ENCODE measurements at regions of chr19 and their contacts with region 1.

Region 1: GRCh38 chr19:35545001-35545911 is at the start of gene TMEM147:
- DNase-seq: peak; percentile 65 to 96
- H3K4me3 ChIP-seq: peak within 1 kb of the TSS; percentile 87 to 88
- H3K27ac ChIP-seq: peak within 1 kb of the TSS; percentile 76 to 88
- H3K4me1 ChIP-seq: peaks cover 0 to 15% of the 10 kb centered on the region in 2 donors
- H3K27me3 ChIP-seq: no peaks in the 10 kb centered on the region
- CTCF ChIP-seq: no peak
- total RNA-seq, gene TMEM147: 99.7 TPM

Region 2: GRCh38 chr19:34677386-34678084 is 867.7 kb before region 1 on chr19 and contains the start of gene ZNF302:
- intact Hi-C with region 1: loop called (anchors 10 kb)
- DNase-seq: peak; percentile 86 to 98
- H3K4me3 ChIP-seq: peak within 1 kb of the TSS; percentile 83 to 85
- H3K27ac ChIP-seq: peak within 1 kb of the TSS; percentile 99
- H3K4me1 ChIP-seq: peaks cover 0 to 9% of the 10 kb centered on the region in 2 donors
- H3K27me3 ChIP-seq: no peaks in the 10 kb centered on the region
- CTCF ChIP-seq: no peak
- total RNA-seq, gene ZNF302: 42.0 TPM

Region 3: DNA sequence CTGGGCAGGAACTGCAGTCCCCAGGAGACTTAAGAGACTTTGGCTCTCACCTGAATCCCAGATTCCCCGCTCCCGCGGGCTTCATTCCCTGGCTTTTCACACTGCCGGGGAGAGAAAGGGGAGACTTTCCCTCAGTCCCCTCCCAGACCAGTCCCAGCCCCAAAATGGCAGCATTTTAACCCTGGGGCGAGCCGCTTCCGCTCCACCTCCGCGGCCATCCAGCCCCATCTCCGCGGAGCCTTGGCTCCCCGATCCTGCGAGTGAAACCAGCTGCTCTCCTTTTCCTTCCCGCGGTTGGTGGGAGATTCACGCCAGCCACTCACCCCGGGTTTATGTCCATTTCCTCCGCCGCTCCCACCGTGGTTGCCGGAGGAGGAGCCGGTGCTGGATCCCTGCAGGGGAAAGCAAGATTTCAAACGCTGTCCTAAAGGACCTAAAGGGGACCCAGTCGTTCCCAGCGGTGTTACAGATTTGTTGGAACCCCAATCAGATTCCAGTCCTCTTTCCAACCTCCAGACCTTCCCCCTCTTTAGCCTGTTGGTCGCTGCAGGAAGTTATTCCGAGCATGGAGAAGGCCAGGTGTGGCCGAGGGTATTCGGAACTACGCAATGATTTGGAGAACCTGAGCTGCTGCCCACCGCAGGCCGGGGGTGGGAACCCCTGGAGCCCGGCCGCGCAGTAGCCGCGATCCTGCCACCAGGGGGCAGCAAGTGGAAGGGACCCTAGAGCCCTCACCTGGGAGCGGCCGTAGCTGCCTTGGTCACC is 35.2 kb before region 1 on chr19:
- intact Hi-C with region 1: loop called (anchors 2 kb)
- DNase-seq: peak in 1 of 2 donors; percentile 88
- H3K4me3 ChIP-seq: peak overlapping the region; percentile 49 to 67
- H3K27ac ChIP-seq: peak overlapping the region; percentile 46 to 59
- H3K4me1 ChIP-seq: no peaks in the 10 kb centered on the region
- H3K27me3 ChIP-seq: no peaks in the 10 kb centered on the region
- CTCF ChIP-seq: peak; percentile 82 to 96 (median 84)

Region 4: GRCh38 chr19:35612559-35613321 is 67.5 kb after region 1 on chr19 and contains the start of gene HAUS5:
- intact Hi-C with region 1: loop called (anchors 1 kb)
- DNase-seq: peak; percentile 82 to 98
- H3K4me3 ChIP-seq: peak within 1 kb of the TSS; percentile 70 to 81
- H3K27ac ChIP-seq: peak within 1 kb of the TSS; percentile 64 to 76
- H3K4me1 ChIP-seq: peaks cover 0 to 8% of the 10 kb centered on the region in 2 donors
- H3K27me3 ChIP-seq: no peaks in the 10 kb centered on the region
- CTCF ChIP-seq: peak in 1 of 3 experiments; percentile 8
- total RNA-seq, gene HAUS5: 1.9 TPM

Region 5: GRCh38 chr19:35628565-35629331 is 83.5 kb after region 1 on chr19 and contains the start of gene RBM42:
- intact Hi-C with region 1: loop called (anchors 1 kb)
- DNase-seq: peak; percentile 95 to 99
- H3K4me3 ChIP-seq: peak within 1 kb of the TSS; percentile 74 to 97
- H3K27ac ChIP-seq: peak within 1 kb of the TSS; percentile 73 to 91
- H3K4me1 ChIP-seq: peaks cover 5 to 10% of the 10 kb centered on the region in 2 donors
- H3K27me3 ChIP-seq: no peaks in the 10 kb centered on the region
- CTCF ChIP-seq: no peak
- total RNA-seq, gene RBM42: 69.0 TPM

Region 6: DNA sequence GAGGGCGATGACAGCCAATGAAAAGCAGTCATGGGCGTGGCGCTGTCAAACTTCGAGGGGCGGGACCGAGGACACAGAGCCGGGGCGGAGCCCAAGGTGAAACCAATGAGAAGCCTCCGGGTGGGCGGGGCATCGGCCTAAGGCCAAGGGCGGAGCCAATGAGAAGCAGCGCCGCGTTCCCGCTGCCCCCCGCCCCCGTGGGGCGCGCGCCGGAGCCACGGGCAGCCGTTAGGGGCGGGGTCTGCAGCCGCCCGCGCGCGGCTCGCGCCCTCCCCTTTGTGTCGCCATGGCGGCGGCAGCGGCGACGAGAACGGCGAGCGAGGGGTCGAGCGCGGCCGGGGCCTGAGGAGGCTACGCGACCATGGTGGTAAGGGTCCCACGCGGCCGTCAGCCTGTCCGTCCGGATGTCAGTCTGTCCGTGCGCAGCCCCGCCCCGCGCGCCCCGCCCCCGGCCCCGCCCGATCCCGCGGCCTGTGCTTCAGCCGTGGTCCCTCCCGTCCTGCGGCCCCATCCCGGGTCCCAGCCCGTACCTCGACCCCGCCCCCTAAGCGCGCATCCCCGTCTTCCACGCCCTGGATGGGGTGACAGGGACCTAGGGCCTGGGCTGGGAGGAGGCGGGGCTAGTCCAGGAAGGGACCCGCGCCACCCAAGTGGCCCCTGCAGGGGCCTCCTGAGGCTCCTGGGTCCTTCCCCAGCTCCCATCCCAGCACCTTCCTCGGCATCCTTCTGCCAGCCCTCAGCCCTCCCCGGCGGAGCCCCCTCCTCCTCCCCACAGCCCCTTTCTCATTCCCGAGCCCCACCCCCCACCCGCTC is 230.2 kb after region 1 on chr19 and contains the start of gene ARHGAP33:
- intact Hi-C with region 1: loop called (anchors 5 kb)
- DNase-seq: peak; percentile 96 to 99
- H3K4me3 ChIP-seq: peak within 1 kb of the TSS; percentile 84 to 88
- H3K27ac ChIP-seq: peak within 1 kb of the TSS; percentile 59 to 61
- H3K4me1 ChIP-seq: peaks cover 5 to 14% of the 10 kb centered on the region in 2 donors
- H3K27me3 ChIP-seq: no peaks in the 10 kb centered on the region
- CTCF ChIP-seq: no peak
- total RNA-seq, gene ARHGAP33: 8.7 TPM